Activated CD4-positive, alpha-beta memory T cell treated with anti-CD3 and anti-CD28 coated beads for 36 hours (primary cell): ENCODE measurements at regions of chr3 and their contacts with region 1.

Region 1: DNA sequence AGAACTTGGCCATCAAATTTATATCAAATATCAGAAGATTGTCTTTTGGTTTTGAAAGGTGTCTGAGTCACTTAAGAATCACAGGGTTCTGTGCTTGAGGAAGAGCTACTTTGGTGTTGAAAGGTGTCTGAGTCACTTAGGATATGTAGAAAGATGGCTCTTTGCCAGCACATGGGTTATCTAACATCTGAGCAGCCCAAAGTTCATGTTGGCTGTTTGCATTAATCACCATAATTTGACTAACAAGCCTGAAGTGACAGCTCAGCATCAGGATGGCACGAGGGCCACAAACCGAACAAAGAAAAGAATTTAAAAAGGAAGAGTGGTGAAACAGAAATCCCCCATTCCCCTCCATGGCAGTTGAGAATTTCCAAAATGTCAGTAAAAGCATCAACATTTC is 190.5 kb upstream of the CMC1 start:
- DNase-seq: peak; percentile 52
- H3K4me3 Mint-ChIP-seq: no peak overlapping the region
- H3K27ac Mint-ChIP-seq: peak overlapping the region; percentile 13
- H3K4me1 Mint-ChIP-seq: peaks cover 26% of the 10 kb centered on the region
- H3K27me3 Mint-ChIP-seq: peaks cover 10% of the 10 kb centered on the region

Region 2: GRCh38 chr3:27721717-27722542 is 329.0 kb before region 1 on chr3 and contains the start of gene EOMES:
- CTCF ChIA-PET with region 1: interaction called, 5 read pairs
- POLR2A ChIA-PET with region 1: no interaction called
- intact Hi-C with region 1: loop called (anchors 2 kb)
- DNase-seq: peak; percentile 77
- H3K4me3 Mint-ChIP-seq: peak within 1 kb of the TSS; percentile 78
- H3K27ac Mint-ChIP-seq: no peak within 1 kb of the TSS
- H3K4me1 Mint-ChIP-seq: peaks cover 21% of the 10 kb centered on the region
- H3K27me3 Mint-ChIP-seq: peaks cover 63% of the 10 kb centered on the region
- total RNA-seq, gene EOMES: 1.4 to 1.5 TPM

Region 3: GRCh38 chr3:27927882-27928281 is 123.0 kb before region 1 on chr3:
- CTCF ChIA-PET with region 1: no interaction called
- POLR2A ChIA-PET with region 1: no interaction called
- intact Hi-C with region 1: loop called (anchors 5 kb)
- DNase-seq: no peak
- H3K4me3 Mint-ChIP-seq: no peak overlapping the region
- H3K27ac Mint-ChIP-seq: peak overlapping the region; percentile 51
- H3K4me1 Mint-ChIP-seq: peaks cover 30% of the 10 kb centered on the region
- H3K27me3 Mint-ChIP-seq: peaks cover 1% of the 10 kb centered on the region

Region 4: GRCh38 chr3:27960133-27960532 is 90.8 kb before region 1 on chr3:
- CTCF ChIA-PET with region 1: no interaction called
- POLR2A ChIA-PET with region 1: no interaction called
- intact Hi-C with region 1: loop called (anchors 5 kb)
- DNase-seq: no peak
- H3K4me3 Mint-ChIP-seq: no peak overlapping the region
- H3K27ac Mint-ChIP-seq: no peak overlapping the region
- H3K4me1 Mint-ChIP-seq: peaks cover 31% of the 10 kb centered on the region
- H3K27me3 Mint-ChIP-seq: no peaks in the 10 kb centered on the region

Region 5: DNA sequence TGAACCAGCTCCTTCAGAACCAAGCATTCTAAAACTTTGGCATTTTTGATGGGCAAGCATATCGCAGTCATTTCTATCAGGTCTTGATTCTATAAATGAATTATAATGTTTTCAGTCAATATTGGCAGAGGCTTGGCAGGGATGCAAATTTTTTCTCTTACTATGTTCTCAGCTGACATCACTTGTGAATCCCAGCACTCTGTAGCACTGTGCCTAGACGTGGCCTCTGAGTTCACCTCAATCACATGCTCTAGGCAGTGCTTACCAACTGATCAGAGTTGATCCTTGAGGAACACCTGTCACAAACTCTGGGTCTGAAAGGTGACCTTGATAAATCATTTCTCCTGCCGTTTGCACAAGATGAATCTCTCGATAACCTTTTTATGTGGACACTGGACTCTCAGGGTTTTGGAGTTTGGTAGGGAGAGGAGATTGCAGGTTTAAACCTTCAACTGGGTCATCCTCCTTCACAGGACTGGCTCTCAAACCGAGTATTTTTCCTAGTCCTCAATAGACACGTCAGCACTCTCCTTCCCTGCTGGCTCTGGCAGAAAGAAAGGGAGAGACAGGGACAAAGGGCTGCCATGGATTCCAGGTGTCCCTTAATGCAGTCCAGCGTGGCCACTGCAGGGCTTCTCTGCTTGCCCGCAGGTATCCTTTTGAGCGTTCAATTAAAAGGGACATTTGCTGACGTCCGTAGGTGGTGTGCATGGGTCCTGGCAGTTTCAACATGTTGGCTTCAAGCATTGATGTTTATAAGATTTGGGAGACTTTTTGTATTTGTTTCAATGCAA is 31.8 kb before region 1 on chr3:
- CTCF ChIA-PET with region 1: no interaction called
- POLR2A ChIA-PET with region 1: no interaction called
- intact Hi-C with region 1: loop called (anchors 1 kb)
- DNase-seq: no peak
- H3K4me3 Mint-ChIP-seq: no peak overlapping the region
- H3K27ac Mint-ChIP-seq: no peak overlapping the region
- H3K4me1 Mint-ChIP-seq: no peaks in the 10 kb centered on the region
- H3K27me3 Mint-ChIP-seq: peaks cover 2% of the 10 kb centered on the region

Region 6: DNA sequence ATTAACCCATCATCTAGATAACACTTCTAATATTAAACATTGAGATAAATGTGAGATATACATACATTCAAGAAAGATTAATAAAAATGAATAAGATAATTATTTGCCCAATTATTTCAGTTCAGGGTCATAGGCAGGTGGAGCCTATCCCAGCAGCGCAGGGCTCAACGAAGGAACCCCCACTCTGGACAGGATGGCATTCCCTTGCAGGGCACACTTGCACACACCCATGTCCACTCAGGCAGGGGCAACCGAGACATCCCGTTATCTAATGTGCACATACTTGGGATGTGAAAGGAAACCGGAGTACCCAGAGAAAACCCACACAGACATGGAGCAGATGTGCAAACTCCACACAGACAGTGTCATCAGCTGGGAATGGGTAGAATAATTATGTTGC is 15.1 kb after region 1 on chr3:
- CTCF ChIA-PET with region 1: no interaction called
- POLR2A ChIA-PET with region 1: no interaction called
- intact Hi-C with region 1: no loop called
- DNase-seq: no peak
- H3K4me3 Mint-ChIP-seq: no peak overlapping the region
- H3K27ac Mint-ChIP-seq: no peak overlapping the region
- H3K4me1 Mint-ChIP-seq: no peaks in the 10 kb centered on the region
- H3K27me3 Mint-ChIP-seq: no peaks in the 10 kb centered on the region

Region 7: GRCh38 chr3:28241221-28242160 is 190.6 kb after region 1 on chr3 and contains the start of gene CMC1:
- CTCF ChIA-PET with region 1: no interaction called
- POLR2A ChIA-PET with region 1: no interaction called
- intact Hi-C with region 1: loop called (anchors 2 kb)
- DNase-seq: peak; percentile 96
- H3K4me3 Mint-ChIP-seq: peak within 1 kb of the TSS; percentile 93
- H3K27ac Mint-ChIP-seq: peak within 1 kb of the TSS; percentile 94
- H3K4me1 Mint-ChIP-seq: peaks cover 38% of the 10 kb centered on the region
- H3K27me3 Mint-ChIP-seq: no peaks in the 10 kb centered on the region
- total RNA-seq, gene CMC1: 27.5 to 28.6 TPM

Region 8: GRCh38 chr3:28348629-28349483 is 298.0 kb after region 1 on chr3 and contains the starts of genes AZI2 and ZCWPW2:
- CTCF ChIA-PET with region 1: no interaction called
- POLR2A ChIA-PET with region 1: no interaction called
- intact Hi-C with region 1: loop called (anchors 2 kb)
- DNase-seq: peak; percentile 94
- H3K4me3 Mint-ChIP-seq: peak within 1 kb of the TSS; percentile 95
- H3K27ac Mint-ChIP-seq: peak within 1 kb of the TSS; percentile 88
- H3K4me1 Mint-ChIP-seq: peaks cover 40% of the 10 kb centered on the region
- H3K27me3 Mint-ChIP-seq: no peaks in the 10 kb centered on the region
- total RNA-seq, gene AZI2: 35.5 to 38.9 TPM
- total RNA-seq, gene ZCWPW2: 0.39 to 0.43 TPM